K562 (cell line): ENCODE measurements at regions of chr6 and their contacts with region 1.

Region 1: DNA sequence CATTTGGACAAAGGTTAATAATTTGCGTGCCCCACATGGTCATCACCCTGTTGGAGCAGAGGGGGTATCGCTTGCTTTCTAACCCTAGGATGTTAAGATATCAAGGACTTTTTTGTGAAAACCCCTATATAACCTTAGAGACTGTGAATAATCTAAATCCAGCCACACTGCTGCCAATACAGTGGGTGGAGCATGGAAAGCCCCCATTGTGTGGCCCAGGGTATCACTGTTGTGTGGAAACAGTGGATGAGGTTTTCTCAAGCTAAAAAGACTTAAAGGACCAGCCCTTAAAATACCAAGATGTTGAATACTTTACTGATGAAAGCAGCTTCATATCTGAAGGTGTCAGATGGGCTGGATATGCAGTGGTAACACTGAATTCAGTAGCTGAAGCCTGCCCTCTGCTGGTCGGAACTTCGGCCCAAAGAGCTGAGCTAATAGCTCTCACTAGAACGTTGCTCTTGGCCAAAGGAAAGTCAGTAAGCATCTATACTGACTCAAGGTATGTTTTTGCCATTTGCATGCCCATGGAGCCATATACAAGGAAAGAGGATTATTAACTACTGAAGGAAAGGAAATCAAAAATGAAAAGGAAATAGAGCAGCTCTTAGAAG is 695.2 kb downstream of the PHF3 start:
- DNase-seq: peak in 1 of 4 experiments; percentile 40
- ATAC-seq: no peak
- H3K4me3 ChIP-seq: no peak overlapping the region
- H3K27ac ChIP-seq: no peak overlapping the region
- H3K4me1 ChIP-seq: no peaks in the 10 kb centered on the region
- H3K27me3 ChIP-seq: no peaks in the 10 kb centered on the region
- CTCF ChIP-seq: peak in 2 of 3 experiments; percentile 30 to 35; a peak in 3 of 6 replicates
- EP300 ChIP-seq: no peak
- POLR2A ChIP-seq: no peak
- RAD21 ChIP-seq: peak in 1 of 2 experiments; percentile 46; a peak in 3 of 4 replicates

Region 2: DNA sequence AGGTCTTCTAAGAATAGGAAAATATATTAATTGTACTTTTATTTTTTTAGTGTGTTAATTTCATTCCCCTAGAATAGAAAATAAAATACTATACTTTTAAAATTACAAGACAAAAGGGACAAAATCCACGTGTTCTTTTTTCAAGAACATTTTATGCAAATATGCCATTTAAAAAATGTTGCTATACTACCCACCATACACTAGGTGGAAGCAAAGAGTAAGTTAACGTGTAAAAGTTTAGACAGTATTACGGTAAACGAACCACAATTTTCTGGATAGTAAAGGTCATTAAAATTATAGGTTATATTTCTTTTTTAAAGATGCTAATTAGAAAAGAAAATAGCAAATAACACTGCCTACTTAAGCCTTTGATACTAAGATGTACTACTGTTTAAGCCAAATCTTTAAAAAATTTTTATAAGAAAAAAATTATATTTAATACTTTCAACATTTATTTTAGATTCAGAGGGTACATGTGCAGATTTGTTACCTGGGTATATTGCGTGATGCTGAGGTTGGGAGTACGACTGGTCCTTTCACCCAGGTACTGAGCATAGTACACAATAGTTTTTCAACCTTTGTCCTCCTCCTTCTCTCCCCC is 407.6 kb before region 1 on chr6:
- CTCF ChIA-PET with region 1: no interaction called
- POLR2A ChIA-PET with region 1: no interaction called
- in situ Hi-C with region 1: no loop called
- intact Hi-C with region 1: loop called (anchors 2 kb)
- DNase-seq: peak; percentile 15 to 34 (median 27)
- ATAC-seq: peak; percentile 49; the same call in 1 of the 3 replicates
- H3K4me3 ChIP-seq: no peak overlapping the region
- H3K27ac ChIP-seq: no peak overlapping the region
- H3K4me1 ChIP-seq: no peaks in the 10 kb centered on the region
- H3K27me3 ChIP-seq: no peaks in the 10 kb centered on the region
- CTCF ChIP-seq: peak in 1 of 3 experiments; percentile 65; a peak in 2 of 6 replicates
- EP300 ChIP-seq: no peak
- POLR2A ChIP-seq: no peak
- RAD21 ChIP-seq: peak; percentile 62 to 72

Region 3: DNA sequence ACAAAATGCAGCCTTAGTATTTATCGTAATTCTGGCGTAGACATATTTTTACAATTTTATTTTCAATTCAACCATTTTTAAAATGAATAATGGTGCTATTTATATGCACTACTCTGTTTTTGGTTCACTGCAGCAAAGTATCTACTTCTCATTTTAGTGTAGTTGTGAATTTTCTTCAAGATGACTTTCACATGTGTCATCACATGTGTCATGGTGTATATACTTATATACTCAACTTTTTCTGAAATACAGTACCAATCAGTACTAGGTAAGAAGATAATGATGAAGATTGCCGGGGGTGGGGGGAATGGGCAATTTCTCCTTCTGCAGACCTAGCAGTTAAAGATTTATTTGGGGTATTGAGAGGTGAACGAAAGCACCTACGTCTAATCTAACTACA is 60.7 kb before region 1 on chr6:
- CTCF ChIA-PET with region 1: no interaction called
- POLR2A ChIA-PET with region 1: no interaction called
- in situ Hi-C with region 1: no loop called
- intact Hi-C with region 1: no loop called
- DNase-seq: no peak
- ATAC-seq: no peak
- H3K4me3 ChIP-seq: no peak overlapping the region
- H3K27ac ChIP-seq: no peak overlapping the region
- H3K4me1 ChIP-seq: no peaks in the 10 kb centered on the region
- H3K27me3 ChIP-seq: no peaks in the 10 kb centered on the region
- CTCF ChIP-seq: no peak
- EP300 ChIP-seq: no peak
- POLR2A ChIP-seq: no peak
- RAD21 ChIP-seq: no peak